HCT116 (cell line): ENCODE measurements at regions of chr16 and their contacts with region 1.

Region 1: GRCh38 chr16:30984669-30985400 is at the start of gene HSD3B7:
- DNase-seq: peak; percentile 58
- ATAC-seq: peak; percentile 91
- H3K4me3 ChIP-seq: peak within 1 kb of the TSS; percentile 35 to 45
- H3K27ac ChIP-seq: peak within 1 kb of the TSS; percentile 49; the same call in 1 of the 2 replicates
- H3K4me1 ChIP-seq: peaks cover 0 to 14% of the 10 kb centered on the region in 2 experiments; a peak in 3 of 4 replicates
- H3K27me3 ChIP-seq: no peaks in the 10 kb centered on the region
- CTCF ChIP-seq: peak; percentile 87 to 98 (median 92)
- POLR2A ChIP-seq: no peak
- RAD21 ChIP-seq: peak; percentile 92
- total RNA-seq, gene HSD3B7: 8.6 TPM

Region 2: GRCh38 chr16:30997000-30997886 is 12.4 kb after region 1 on chr16:
- CTCF ChIA-PET with region 1: interaction called, 12 read pairs
- POLR2A ChIA-PET with region 1: no interaction called
- RAD21 ChIA-PET with region 1: interaction called in 1 of 2 experiments, 3 read pairs
- intact Hi-C with region 1: no loop called
- DNase-seq: peak; percentile 43
- ATAC-seq: peak; percentile 89
- H3K4me3 ChIP-seq: peak overlapping the region; percentile 72 to 83
- H3K27ac ChIP-seq: peak overlapping the region; percentile 72
- H3K4me1 ChIP-seq: peaks cover 22 to 44% of the 10 kb centered on the region in 2 experiments
- H3K27me3 ChIP-seq: no peaks in the 10 kb centered on the region
- CTCF ChIP-seq: no peak
- POLR2A ChIP-seq: no peak
- RAD21 ChIP-seq: no peak

Region 3: DNA sequence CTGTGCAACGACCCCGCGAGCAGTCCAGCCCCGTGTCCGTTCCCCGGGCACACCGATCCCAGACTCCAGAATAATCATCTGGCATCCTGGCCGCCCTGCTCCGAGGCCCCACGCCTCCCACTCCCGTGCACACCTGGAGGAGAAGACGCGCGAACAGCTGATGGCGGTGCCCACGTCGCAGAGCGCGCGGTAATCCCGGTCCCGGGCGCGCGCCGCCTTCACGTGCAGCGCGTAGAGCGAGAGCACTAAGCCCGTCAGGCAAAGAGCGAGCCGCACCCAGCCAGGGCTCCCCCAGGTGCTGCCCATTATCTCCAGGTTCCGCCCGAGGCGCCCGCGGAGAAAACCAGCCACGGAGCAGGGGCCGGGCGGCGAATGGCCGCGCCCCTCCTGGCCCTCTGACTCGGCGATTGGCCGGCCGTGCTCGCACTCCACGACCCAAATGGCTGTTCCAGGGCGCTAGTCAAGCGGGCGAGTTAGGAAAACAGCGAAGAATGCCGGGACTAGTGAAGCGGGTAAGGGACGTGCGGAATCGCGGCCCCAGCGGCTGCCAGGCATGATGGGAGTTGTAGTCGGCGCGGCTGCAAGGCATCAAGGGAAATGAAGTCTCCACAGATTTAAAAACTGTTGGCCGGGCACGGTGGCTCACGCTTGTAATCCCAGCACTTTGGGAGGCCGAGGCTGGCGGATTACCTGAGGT is 109.7 kb after region 1 on chr16 and contains the start of gene VKORC1:
- CTCF ChIA-PET with region 1: interaction called, 24 read pairs
- POLR2A ChIA-PET with region 1: no interaction called
- RAD21 ChIA-PET with region 1: interaction called, 4 to 5 read pairs
- intact Hi-C with region 1: loop called (anchors 1 kb)
- DNase-seq: peak; percentile 97
- ATAC-seq: peak; percentile 92
- H3K4me3 ChIP-seq: peak within 1 kb of the TSS; percentile 88 to 98
- H3K27ac ChIP-seq: peak within 1 kb of the TSS; percentile 85
- H3K4me1 ChIP-seq: peaks cover 13 to 27% of the 10 kb centered on the region in 2 experiments
- H3K27me3 ChIP-seq: no peaks in the 10 kb centered on the region
- CTCF ChIP-seq: no peak
- POLR2A ChIP-seq: peak; percentile 58
- RAD21 ChIP-seq: no peak
- total RNA-seq, gene VKORC1: 83.8 TPM

Region 4: GRCh38 chr16:31333686-31334649 is 349.1 kb after region 1 on chr16:
- CTCF ChIA-PET with region 1: interaction called, 8 read pairs
- POLR2A ChIA-PET with region 1: no interaction called
- RAD21 ChIA-PET with region 1: interaction called, 3 read pairs
- intact Hi-C with region 1: loop called (anchors 2 kb)
- DNase-seq: peak; percentile 52
- ATAC-seq: peak; percentile 95
- H3K4me3 ChIP-seq: no peak overlapping the region
- H3K27ac ChIP-seq: no peak overlapping the region
- H3K4me1 ChIP-seq: 0 out of 4 replicates have a peak, but pooled peaks cover 0 to 3% of the 10 kb centered on the region in 2 experiments
- H3K27me3 ChIP-seq: peaks cover 5% of the 10 kb centered on the region; the same call in 1 of the 2 replicates
- CTCF ChIP-seq: peak; percentile 53 to 66 (median 59); a peak in 5 of 6 replicates
- POLR2A ChIP-seq: no peak
- RAD21 ChIP-seq: peak; percentile 87

Region 5: DNA sequence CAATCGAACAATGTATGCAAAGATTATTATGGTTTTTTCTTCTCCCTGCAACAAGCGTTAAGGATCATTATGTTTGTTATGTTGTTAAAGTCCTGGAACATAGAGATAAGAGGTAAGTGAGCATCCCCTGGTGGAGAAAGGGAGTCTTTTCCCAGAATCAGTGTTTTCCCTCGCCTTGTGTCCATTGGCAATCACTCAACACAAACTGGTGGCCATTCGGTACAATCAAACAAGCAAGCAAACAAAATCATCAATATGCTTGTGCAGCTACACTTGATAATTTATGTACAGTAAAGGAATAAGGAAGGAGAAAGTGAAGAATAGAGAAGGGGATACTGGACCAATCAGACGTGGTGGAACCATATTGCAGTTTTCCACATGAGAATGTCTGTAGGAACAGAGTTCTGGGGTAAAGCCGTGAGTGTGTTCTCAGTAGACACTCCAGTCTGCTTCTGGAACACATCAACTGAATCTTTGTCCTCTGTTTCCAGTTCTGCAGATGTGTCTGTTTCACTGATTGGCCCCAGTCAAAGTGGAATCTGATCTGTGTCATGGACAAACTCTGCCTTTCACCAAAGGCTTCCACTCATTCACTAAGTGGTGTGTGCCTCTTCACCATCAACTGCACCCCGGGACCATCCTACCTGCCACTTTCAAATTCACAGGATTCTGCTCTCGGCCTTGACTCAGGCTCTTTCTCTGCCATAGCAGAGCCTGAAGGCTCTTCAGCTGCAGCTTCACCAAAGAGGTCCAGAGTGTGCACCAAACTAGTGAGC is 712.3 kb after region 1 on chr16:
- CTCF ChIA-PET with region 1: no interaction called
- POLR2A ChIA-PET with region 1: no interaction called
- RAD21 ChIA-PET with region 1: no interaction called
- intact Hi-C with region 1: loop called (anchors 10 kb)
- DNase-seq: peak; percentile 43
- ATAC-seq: peak; percentile 26; the same call in 1 of the 2 replicates
- H3K4me3 ChIP-seq: no peak overlapping the region
- H3K27ac ChIP-seq: no peak overlapping the region
- H3K4me1 ChIP-seq: peaks cover 8 to 15% of the 10 kb centered on the region in 2 experiments; a peak in 3 of 4 replicates
- H3K27me3 ChIP-seq: no peaks in the 10 kb centered on the region
- CTCF ChIP-seq: peak; percentile 65 to 78 (median 71)
- POLR2A ChIP-seq: no peak
- RAD21 ChIP-seq: peak; percentile 86